ENCODE measurements at regions of chr4 and their contacts with region 1.

Region 1: DNA sequence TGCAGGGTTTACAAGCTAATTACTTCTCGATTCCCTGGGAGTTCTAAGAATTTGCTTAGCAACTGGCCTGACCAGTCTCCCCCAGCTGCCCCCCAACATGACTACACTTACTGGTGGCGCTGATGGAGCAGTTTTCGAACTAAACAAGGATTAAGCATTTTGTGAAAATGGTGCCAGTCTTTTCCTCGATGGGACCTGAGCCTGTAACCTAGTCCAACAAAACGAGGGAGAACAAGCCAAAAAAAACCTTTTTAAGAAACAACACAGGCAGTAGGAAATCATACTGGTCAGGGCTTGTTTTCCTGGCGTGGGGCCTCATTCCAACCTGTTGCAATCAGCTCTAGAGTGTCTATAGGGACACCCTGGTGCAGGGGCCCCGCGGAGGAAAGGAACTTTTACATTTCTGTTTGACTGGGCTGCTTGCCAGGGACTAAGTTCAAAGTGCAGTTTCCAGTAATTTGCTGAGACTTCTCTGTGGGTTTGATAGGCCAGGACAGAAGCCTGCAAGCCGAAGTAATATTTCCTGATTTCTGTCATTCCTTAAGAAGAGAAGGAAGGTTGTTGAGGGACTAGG is 158.7 kb downstream of the SPRY1 start:
- DNase-seq: peak; percentile 92 to 93
- ATAC-seq: peak; percentile 92
- H3K4me3 ChIP-seq: no peak overlapping the region
- H3K27ac ChIP-seq: peak overlapping the region; percentile 83 to 97
- H3K4me1 ChIP-seq: peaks cover 2 to 5% of the 10 kb centered on the region in 2 donors
- H3K27me3 ChIP-seq: no peaks in the 10 kb centered on the region

Region 2: GRCh38 chr4:123412091-123412505 is 143.2 kb before region 1 on chr4:
- intact Hi-C with region 1: loop called in 1 of 2 experiments (anchors 5 kb)
- DNase-seq: no peak
- ATAC-seq: no peak
- H3K4me3 ChIP-seq: no peak overlapping the region
- H3K27ac ChIP-seq: no peak overlapping the region
- H3K4me1 ChIP-seq: peaks cover 0 to 3% of the 10 kb centered on the region in 2 donors
- H3K27me3 ChIP-seq: no peaks in the 10 kb centered on the region

Region 3: DNA sequence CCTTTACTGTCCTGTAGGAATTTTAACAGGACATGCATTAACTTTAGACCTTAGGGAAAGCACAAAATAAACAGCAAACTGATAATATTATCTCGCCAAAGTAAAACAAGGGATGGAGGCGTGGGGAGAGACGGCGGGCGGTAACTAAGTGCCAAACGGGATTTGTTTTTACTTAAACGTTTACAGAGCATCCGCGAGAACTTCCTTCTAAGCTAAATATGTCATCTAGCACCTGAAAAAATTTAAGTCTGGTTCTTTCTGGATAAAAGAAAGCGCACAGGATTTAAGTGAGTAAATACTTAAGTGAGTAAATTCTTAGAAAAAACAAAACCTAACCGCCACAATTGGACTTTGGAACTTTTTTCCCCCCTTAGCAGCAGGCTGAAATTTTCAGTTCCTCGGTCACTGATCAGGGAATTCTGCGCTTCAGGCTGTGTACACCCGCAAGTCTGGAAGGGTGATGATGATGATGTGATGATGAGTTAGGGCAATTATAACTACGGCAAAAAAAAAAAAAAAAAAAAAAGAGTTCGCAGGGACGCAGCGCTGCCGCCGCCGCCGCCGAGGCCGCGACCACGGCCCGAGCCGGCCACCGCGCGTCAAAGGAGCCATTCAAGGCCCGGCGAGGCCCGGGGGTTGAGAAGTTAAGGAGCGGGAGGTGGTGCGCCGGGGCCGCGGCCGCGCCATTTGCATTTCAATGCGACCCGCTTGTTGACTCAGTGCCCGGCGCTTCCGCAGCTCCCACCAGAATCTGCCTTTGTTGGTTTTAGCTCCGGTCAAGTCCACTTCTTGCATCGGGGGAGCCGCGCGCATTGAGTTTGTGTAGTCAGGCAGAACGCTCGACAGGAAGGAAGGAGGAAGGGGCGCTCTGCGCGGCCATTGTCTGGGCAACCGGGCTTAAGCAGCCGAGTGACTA is 50.0 kb before region 1 on chr4:
- intact Hi-C with region 1: loop called in 1 of 2 experiments (anchors 5 kb)
- DNase-seq: peak; percentile 75 to 85
- ATAC-seq: peak; percentile 78
- H3K4me3 ChIP-seq: peak overlapping the region; percentile 57 to 60
- H3K27ac ChIP-seq: no peak overlapping the region
- H3K4me1 ChIP-seq: peaks cover 0 to 1% of the 10 kb centered on the region in 2 donors
- H3K27me3 ChIP-seq: no peaks in the 10 kb centered on the region

Region 4: GRCh38 chr4:123599920-123600810 is 44.8 kb after region 1 on chr4:
- intact Hi-C with region 1: no loop called
- DNase-seq: peak; percentile 78 to 82
- ATAC-seq: peak; percentile 62
- H3K4me3 ChIP-seq: no peak overlapping the region
- H3K27ac ChIP-seq: no peak overlapping the region
- H3K4me1 ChIP-seq: no peaks in the 10 kb centered on the region
- H3K27me3 ChIP-seq: no peaks in the 10 kb centered on the region

Region 5: DNA sequence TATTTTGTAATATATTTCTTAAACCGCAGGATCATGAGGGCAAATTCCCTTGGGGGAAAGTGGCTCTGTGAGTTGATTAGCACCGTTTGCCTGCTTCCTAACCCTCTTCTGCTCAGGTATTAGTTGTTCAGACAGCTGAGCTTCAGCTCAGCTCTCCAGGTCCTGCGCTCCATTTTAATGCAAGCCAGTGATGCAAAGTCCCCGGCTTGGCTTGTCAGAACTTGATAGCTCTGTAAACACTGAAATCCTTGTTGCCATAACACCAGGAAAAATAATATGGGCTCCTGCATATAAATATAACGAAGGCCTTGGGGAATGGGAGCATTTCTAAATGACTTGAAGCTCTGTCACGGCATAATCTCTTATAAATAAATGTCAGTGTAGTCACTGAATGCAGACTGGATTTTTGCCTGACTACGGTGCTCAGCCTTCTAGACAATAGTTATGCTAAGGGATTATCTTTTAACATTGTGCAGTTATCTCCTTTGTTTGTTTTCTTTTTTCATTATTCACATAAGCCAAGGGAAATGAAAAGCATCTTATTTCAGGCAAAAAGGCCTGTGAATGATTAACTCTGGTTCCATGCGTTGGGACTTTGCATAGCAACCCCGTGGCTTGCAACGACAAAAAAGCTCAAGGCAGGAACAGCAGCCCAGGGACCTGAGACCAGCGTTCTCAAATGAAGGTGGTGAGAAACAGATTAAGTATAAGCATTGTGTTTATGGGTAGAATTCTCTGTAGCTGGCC is 94.5 kb after region 1 on chr4:
- intact Hi-C with region 1: loop called (anchors 1 to 5 kb)
- DNase-seq: no peak
- ATAC-seq: peak; percentile 75
- H3K4me3 ChIP-seq: peak overlapping the region in 1 of 2 donors; percentile 6
- H3K27ac ChIP-seq: peak overlapping the region; percentile 88 to 97
- H3K4me1 ChIP-seq: peaks cover 0 to 3% of the 10 kb centered on the region in 2 donors
- H3K27me3 ChIP-seq: no peaks in the 10 kb centered on the region

Measured in aorta (tissue), 5 donors.